GM10248 (cell line): ENCODE measurements at regions of chr15 and their contacts with region 1.

Region 1: GRCh38 chr15:65580287-65580686 is 30.6 kb downstream of the INTS14 start:
- DNase-seq: no peak
- CTCF ChIP-seq: no peak

Region 2: GRCh38 chr15:65595960-65596359 is 15.7 kb after region 1 on chr15:
- CTCF ChIA-PET with region 1: interaction called, 14 read pairs
- POLR2A ChIA-PET with region 1: no interaction called
- DNase-seq: no peak
- CTCF ChIP-seq: peak; percentile 38